IMR-90 (cell line): ENCODE measurements at regions of chr10 and their contacts with region 1.

Region 1: GRCh38 chr10:12656518-12657142 is 307.3 kb downstream of the CAMK1D start:
- DNase-seq: peak; percentile 75
- ATAC-seq: peak; percentile 71
- H3K4me3 ChIP-seq: no peak overlapping the region
- H3K27ac ChIP-seq: no peak overlapping the region
- H3K4me1 ChIP-seq: no peaks in the 10 kb centered on the region
- H3K27me3 ChIP-seq: no peaks in the 10 kb centered on the region
- CTCF ChIP-seq: peak; percentile 81
- POLR2A ChIP-seq: no peak
- RAD21 ChIP-seq: peak; percentile 81

Region 2: GRCh38 chr10:12348870-12349628 is 307.6 kb before region 1 on chr10 and contains the start of gene CAMK1D:
- CTCF ChIA-PET with region 1: no interaction called
- POLR2A ChIA-PET with region 1: no interaction called
- dilution Hi-C with region 1: no loop called
- in situ Hi-C with region 1: no loop called
- intact Hi-C with region 1: loop called (anchors 2 kb)
- DNase-seq: peak; percentile 66
- ATAC-seq: peak; percentile 85
- H3K4me3 ChIP-seq: peak within 1 kb of the TSS; percentile 84
- H3K27ac ChIP-seq: peak within 1 kb of the TSS; percentile 37; the same call in 1 of the 2 replicates
- H3K4me1 ChIP-seq: no peaks in the 10 kb centered on the region
- H3K27me3 ChIP-seq: peaks cover 4% of the 10 kb centered on the region; the same call in 1 of the 2 replicates
- CTCF ChIP-seq: peak; percentile 43
- POLR2A ChIP-seq: peak; percentile 60; the same call in 1 of the 2 replicates
- RAD21 ChIP-seq: no peak; the same call in 1 of the 2 replicates
- total RNA-seq, gene CAMK1D: 4.2 and 5.0 TPM in 2 replicates

Region 3: DNA sequence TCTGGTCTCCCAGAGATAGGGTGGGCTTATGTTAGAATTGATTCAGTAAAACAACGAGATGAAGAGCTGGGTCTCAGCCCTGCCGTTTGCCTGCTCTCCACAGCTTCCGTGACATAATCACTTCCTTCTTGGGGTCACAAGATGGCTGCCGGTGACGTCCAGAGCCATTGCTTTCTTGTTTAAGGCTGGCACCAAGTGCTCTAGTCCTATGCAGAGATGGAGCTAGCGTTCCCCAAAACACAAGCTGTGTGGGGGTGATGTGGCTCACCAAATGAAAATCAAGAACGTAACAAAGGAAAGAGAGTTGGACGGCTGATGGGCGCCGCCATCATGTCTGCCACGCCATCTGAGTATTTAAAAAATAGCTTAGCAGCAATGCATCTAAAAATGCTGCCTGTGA is 11.2 kb before region 1 on chr10:
- CTCF ChIA-PET with region 1: interaction called, 10 read pairs
- POLR2A ChIA-PET with region 1: no interaction called
- dilution Hi-C with region 1: no loop called
- in situ Hi-C with region 1: no loop called
- intact Hi-C with region 1: no loop called
- DNase-seq: no peak
- ATAC-seq: no peak
- H3K4me3 ChIP-seq: no peak overlapping the region
- H3K27ac ChIP-seq: no peak overlapping the region
- H3K4me1 ChIP-seq: no peaks in the 10 kb centered on the region
- H3K27me3 ChIP-seq: peaks cover 4% of the 10 kb centered on the region; the same call in 1 of the 2 replicates
- CTCF ChIP-seq: no peak
- POLR2A ChIP-seq: no peak
- RAD21 ChIP-seq: no peak